Left cardiac atrium (tissue), 4 donors: ENCODE measurements at regions of chr5 and their contacts with region 1.

Region 1: GRCh38 chr5:138449501-138450239 is 10.8 kb downstream of the REEP2 start:
- DNase-seq: peak; percentile 92
- ATAC-seq: peak; percentile 90 to 94

Region 2: GRCh38 chr5:137179203-137179602 is 1270.5 kb before region 1 on chr5:
- intact Hi-C with region 1: no loop called
- DNase-seq: no peak
- ATAC-seq: no peak

Region 3: GRCh38 chr5:138110266-138110963 is 339.3 kb before region 1 on chr5:
- intact Hi-C with region 1: no loop called
- DNase-seq: no peak
- ATAC-seq: no peak

Region 4: GRCh38 chr5:138282920-138283742 is 166.5 kb before region 1 on chr5:
- intact Hi-C with region 1: no loop called
- DNase-seq: peak; percentile 26
- ATAC-seq: peak; percentile 76 to 96

Region 5: DNA sequence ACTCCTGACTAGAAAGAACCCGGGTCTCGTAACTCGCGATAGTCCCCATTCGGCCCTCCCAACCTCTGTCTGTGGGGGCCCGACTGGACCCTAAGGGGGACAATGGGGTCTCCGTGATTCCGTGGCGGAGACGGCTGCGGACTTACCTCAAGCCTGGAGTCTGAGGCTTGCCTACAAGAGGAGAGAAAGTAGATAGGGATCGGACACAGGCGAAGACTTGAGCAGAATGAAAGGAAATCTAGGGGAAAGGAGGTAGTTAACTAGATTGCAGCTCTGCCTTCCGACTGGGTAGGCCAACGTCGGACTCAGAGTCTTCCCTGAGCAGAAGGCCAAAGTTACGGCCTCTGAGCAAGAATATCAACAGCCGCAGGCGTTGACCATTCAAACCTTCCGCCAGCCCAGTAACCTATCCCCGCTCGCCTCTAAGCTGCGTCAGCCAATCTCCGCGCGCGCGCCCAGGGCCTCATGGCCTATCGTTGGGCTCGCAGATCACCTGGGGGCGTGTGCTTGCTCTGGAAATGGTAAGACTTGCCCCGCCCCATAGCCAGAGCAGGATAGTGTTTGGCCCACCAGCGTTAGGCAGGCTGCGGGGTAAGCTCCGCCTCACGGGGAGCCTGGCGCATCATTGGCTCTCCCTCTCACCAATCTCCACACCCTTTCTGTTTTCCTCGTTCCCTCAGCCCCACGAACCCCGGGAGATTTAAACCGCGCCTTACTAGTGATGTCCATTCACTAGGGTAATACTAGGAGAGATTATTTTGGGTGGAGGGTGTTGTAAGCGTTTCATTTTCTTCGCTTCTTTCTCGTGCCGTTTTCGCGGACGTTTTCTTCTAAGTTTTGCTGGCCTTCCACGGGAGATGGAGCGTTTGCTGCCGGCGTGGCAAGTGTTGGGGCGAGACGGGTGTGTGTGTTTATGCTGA is 118.0 kb before region 1 on chr5 and contains the start of gene CDC25C:
- intact Hi-C with region 1: no loop called
- DNase-seq: peak; percentile 99
- ATAC-seq: peak; percentile 100
- total RNA-seq, gene CDC25C: 0.21 TPM in 1 of 2 donors, not detected in the other

Region 6: DNA sequence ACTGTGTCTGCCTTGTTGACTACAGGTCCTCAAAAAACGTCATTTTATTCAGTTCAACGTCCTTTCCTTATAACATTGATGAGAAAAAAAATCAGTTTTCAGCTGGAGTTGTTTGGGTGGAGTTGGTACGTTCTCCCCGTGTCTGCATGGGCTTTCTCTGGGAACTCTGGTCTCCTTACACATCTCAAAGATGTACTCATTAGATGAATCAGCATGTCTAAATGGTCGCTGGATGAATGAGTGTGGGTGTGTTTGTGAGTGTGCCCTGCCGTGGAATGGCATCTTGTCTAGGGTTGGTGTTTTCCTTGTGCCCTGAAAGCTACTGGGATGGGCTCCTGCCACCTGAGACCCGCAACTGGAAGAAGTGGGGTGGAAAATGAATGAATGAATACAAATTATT is 45.7 kb after region 1 on chr5:
- intact Hi-C with region 1: loop called in 1 of 2 experiments (anchors 5 kb)
- DNase-seq: no peak
- ATAC-seq: no peak

Region 7: DNA sequence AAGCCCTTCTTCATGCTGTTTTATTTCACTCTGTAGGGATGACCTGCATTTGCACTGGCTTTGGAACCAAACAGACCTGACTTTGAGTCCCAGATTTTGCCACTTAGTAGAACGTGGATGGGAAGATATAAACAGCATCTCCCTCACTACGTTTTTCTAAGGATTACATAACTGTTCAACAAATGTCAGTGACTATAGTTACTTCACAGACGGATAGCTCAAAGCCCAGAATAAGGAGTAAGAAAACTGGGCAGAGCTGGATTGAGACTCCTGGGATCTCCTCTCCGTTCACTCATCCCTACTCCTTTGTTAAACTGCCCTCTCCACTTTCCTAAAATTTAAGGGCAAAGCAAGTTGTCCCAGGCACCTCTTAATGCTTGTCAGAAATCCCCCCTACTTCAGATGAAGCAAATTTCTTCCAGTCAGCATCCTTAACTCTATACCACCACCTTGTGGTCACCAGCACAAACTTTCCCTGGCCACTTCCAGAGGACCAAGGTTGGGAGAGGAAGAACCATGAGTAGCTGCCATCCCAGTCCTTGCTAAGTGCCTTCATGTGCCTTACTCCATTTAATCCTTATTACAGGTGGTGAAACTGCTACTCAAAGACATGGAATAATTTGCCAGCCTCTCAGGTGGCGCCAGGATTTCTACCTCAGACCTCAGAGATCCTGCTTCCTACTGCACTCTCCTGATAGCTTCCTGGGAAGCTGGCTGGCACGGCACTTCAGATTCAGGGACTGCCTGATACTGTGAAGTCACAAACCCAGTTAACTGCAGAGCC is 54.0 kb after region 1 on chr5:
- intact Hi-C with region 1: loop called (anchors 2 to 5 kb)
- DNase-seq: no peak
- ATAC-seq: peak; percentile 76

Region 8: DNA sequence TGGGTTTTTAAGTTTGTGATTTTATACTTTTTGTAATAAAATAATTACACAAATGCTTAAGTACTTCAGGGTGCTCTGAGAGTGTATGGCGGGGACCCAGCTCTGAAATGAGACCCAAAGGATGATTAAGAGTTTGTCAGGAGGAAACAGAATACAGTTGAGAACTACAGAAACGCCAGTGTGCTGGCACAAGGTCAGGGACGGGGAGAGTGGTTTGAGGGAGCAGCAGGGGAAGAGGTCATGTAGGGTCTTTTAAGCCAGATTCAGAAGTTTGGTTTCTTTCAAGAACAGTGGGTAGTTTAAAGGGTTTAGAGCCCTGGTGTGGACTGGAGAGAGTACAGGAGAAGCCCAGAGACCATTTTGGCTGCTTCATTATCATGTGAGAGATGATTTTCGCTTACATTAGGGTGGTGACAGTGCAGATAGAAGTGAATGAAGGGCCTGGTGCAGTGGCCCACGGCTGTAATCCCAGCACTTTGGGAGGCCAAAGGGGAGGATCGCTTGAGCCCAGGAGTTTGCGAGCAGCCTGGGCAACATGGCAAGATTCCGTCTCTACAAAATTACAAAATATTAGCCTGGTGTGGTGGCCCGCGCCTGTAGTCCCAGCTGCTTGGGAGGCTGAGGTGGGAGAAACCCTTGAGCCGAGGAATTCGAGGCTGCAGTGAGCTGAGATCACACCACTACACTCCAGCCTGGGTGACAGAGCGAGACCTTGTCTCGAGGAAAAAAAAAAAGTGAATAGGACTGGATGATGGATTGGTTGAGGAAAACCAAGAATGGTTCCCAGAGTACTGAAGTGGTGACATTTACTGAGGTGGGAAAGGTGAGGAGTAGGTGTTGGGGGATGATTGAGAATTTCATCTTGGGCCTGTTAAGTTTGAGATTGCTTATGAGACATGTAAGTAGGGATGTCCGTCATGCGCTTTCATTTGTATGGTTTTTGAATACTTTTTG is 94.8 kb after region 1 on chr5:
- intact Hi-C with region 1: loop called in 1 of 2 experiments (anchors 5 kb)
- DNase-seq: peak; percentile 36
- ATAC-seq: no peak